Activated naive CD4-positive, alpha-beta T cell treated with anti-CD3 and anti-CD28 coated beads for 36 hours (primary cell): ENCODE measurements at regions of chr20 and their contacts with region 1.

Region 1: GRCh38 chr20:1626528-1627249 is 6.9 kb upstream of the SIRPB1 start:
- DNase-seq: peak; percentile 18
- H3K4me3 Mint-ChIP-seq: no peak overlapping the region
- H3K27ac Mint-ChIP-seq: peak overlapping the region; percentile 89
- H3K4me1 Mint-ChIP-seq: peaks cover 94% of the 10 kb centered on the region
- H3K27me3 Mint-ChIP-seq: no peaks in the 10 kb centered on the region

Region 2: GRCh38 chr20:1651268-1652058 is 24.8 kb after region 1 on chr20:
- CTCF ChIA-PET with region 1: interaction called, 6 read pairs
- intact Hi-C with region 1: loop called (anchors 1 kb)
- DNase-seq: peak; percentile 36
- H3K4me3 Mint-ChIP-seq: no peak overlapping the region
- H3K27ac Mint-ChIP-seq: peak overlapping the region; percentile 43
- H3K4me1 Mint-ChIP-seq: peaks cover 84% of the 10 kb centered on the region
- H3K27me3 Mint-ChIP-seq: no peaks in the 10 kb centered on the region

Region 3: GRCh38 chr20:1685304-1686052 is 58.8 kb after region 1 on chr20:
- CTCF ChIA-PET with region 1: no interaction called
- intact Hi-C with region 1: loop called (anchors 1 kb)
- DNase-seq: peak; percentile 56
- H3K4me3 Mint-ChIP-seq: peak overlapping the region; percentile 83
- H3K27ac Mint-ChIP-seq: peak overlapping the region; percentile 95
- H3K4me1 Mint-ChIP-seq: peaks cover 82% of the 10 kb centered on the region
- H3K27me3 Mint-ChIP-seq: no peaks in the 10 kb centered on the region

Region 4: DNA sequence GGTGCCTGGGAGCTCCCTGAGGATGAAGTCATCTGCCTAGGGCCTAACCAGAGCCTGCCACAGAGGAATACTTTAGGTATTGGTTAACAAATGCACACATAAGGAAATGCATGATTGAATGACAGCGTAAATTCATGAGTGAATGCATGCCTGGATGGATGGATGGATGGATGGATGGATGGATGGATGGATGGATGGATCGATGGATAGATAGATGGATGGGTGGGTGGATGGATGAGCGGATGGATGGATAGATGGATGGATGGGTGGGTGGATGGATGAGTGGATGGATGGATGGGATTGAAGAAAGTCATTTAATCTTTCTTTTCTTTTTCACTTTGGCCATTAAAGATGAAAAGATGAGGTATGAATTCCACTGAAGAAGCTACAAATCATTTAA is 142.8 kb after region 1 on chr20:
- CTCF ChIA-PET with region 1: no interaction called
- intact Hi-C with region 1: no loop called
- DNase-seq: no peak
- H3K4me3 Mint-ChIP-seq: no peak overlapping the region
- H3K27ac Mint-ChIP-seq: no peak overlapping the region
- H3K4me1 Mint-ChIP-seq: peaks cover under 1% of the 10 kb centered on the region
- H3K27me3 Mint-ChIP-seq: no peaks in the 10 kb centered on the region

Region 5: GRCh38 chr20:1816384-1817381 is 190.0 kb after region 1 on chr20:
- CTCF ChIA-PET with region 1: no interaction called
- intact Hi-C with region 1: no loop called
- DNase-seq: peak; percentile 38
- H3K4me3 Mint-ChIP-seq: no peak overlapping the region
- H3K27ac Mint-ChIP-seq: no peak overlapping the region
- H3K4me1 Mint-ChIP-seq: peaks cover 18% of the 10 kb centered on the region
- H3K27me3 Mint-ChIP-seq: peaks cover 34% of the 10 kb centered on the region

Region 6: GRCh38 chr20:2172305-2173175 is 545.9 kb after region 1 on chr20:
- CTCF ChIA-PET with region 1: no interaction called
- intact Hi-C with region 1: no loop called
- DNase-seq: peak; percentile 84
- H3K4me3 Mint-ChIP-seq: no peak overlapping the region
- H3K27ac Mint-ChIP-seq: no peak overlapping the region
- H3K4me1 Mint-ChIP-seq: peaks cover 3% of the 10 kb centered on the region
- H3K27me3 Mint-ChIP-seq: peaks cover 3% of the 10 kb centered on the region